AG04450 (cell line): ENCODE measurements at regions of chr2 and their contacts with region 1.

Region 1: DNA sequence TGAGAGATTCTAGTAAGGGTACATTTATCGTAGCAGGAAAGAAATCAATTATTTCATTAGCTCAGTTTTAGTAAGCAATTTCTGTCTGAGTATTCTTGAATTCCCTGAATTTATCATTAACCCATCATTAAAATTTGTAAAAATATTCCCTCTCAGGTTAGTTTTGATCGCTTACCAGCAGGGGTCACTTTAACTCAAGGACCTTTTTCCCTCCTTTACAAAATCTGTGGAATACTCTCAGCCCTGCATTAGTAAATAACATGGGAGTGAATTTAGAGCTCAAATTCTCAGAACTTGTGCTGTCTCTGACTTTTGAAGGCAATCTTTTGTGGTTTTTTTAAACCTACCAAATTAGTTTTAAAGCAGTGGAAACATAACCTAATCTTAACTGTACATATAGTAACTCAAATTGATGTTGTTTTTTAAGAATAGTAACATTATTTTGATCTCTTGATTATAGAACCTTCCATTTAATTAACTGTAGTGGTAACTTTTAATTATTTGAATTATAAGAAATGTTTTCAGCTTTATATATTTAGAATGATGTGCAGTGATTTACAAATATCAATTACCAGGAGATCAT is 97.2 kb downstream of the AGPS start:
- DNase-seq: no peak
- H3K4me3 ChIP-seq: no peak overlapping the region
- H3K27ac ChIP-seq: no peak overlapping the region
- H3K27me3 ChIP-seq: no peaks in the 10 kb centered on the region
- CTCF ChIP-seq: peak; percentile 77

Region 2: GRCh38 chr2:177460973-177461585 is 28.7 kb before region 1 on chr2:
- CTCF ChIA-PET with region 1: interaction called, 16 read pairs
- POLR2A ChIA-PET with region 1: no interaction called
- DNase-seq: no peak
- H3K4me3 ChIP-seq: no peak overlapping the region
- H3K27ac ChIP-seq: no peak overlapping the region
- H3K27me3 ChIP-seq: no peaks in the 10 kb centered on the region
- CTCF ChIP-seq: no peak

Region 3: GRCh38 chr2:177506998-177507397 is 17.2 kb after region 1 on chr2:
- CTCF ChIA-PET with region 1: interaction called, 38 read pairs
- POLR2A ChIA-PET with region 1: no interaction called
- DNase-seq: no peak
- H3K4me3 ChIP-seq: no peak overlapping the region
- H3K27ac ChIP-seq: no peak overlapping the region
- H3K27me3 ChIP-seq: no peaks in the 10 kb centered on the region
- CTCF ChIP-seq: no peak

Region 4: GRCh38 chr2:177530561-177530960 is 40.8 kb after region 1 on chr2:
- CTCF ChIA-PET with region 1: interaction called, 50 read pairs
- POLR2A ChIA-PET with region 1: no interaction called
- DNase-seq: no peak
- H3K4me3 ChIP-seq: no peak overlapping the region
- H3K27ac ChIP-seq: no peak overlapping the region
- H3K27me3 ChIP-seq: no peaks in the 10 kb centered on the region
- CTCF ChIP-seq: no peak

Region 5: GRCh38 chr2:177604271-177605065 is 114.7 kb after region 1 on chr2:
- CTCF ChIA-PET with region 1: interaction called, 112 read pairs
- POLR2A ChIA-PET with region 1: no interaction called
- DNase-seq: peak; percentile 23
- H3K4me3 ChIP-seq: peak overlapping the region; percentile 8; the same call in 1 of the 2 replicates
- H3K27ac ChIP-seq: no peak overlapping the region
- H3K27me3 ChIP-seq: no peaks in the 10 kb centered on the region
- CTCF ChIP-seq: peak; percentile 85

Region 6: GRCh38 chr2:177763532-177764265 is 273.9 kb after region 1 on chr2:
- CTCF ChIA-PET with region 1: interaction called, 22 read pairs
- POLR2A ChIA-PET with region 1: no interaction called
- DNase-seq: peak; percentile 29
- H3K4me3 ChIP-seq: peak overlapping the region; percentile 21; the same call in 1 of the 2 replicates
- H3K27ac ChIP-seq: no peak overlapping the region
- H3K27me3 ChIP-seq: no peaks in the 10 kb centered on the region
- CTCF ChIP-seq: peak; percentile 80